ENCODE measurements at regions of chr1 and their contacts with region 1.

Region 1: GRCh38 chr1:57431400-57431799 is 7.5 kb upstream of the DAB1 start:
- DNase-seq: no peak
- H3K4me3 ChIP-seq: no peak overlapping the region
- H3K27ac ChIP-seq: no peak overlapping the region
- H3K4me1 ChIP-seq: no peaks in the 10 kb centered on the region
- H3K27me3 ChIP-seq: no peaks in the 10 kb centered on the region
- CTCF ChIP-seq: no peak

Region 2: GRCh38 chr1:57397791-57398469 is 33.5 kb before region 1 on chr1:
- CTCF ChIA-PET with region 1: no interaction called
- POLR2A ChIA-PET with region 1: interaction called, 18 read pairs
- intact Hi-C with region 1: no loop called
- DNase-seq: no peak
- H3K4me3 ChIP-seq: no peak overlapping the region
- H3K27ac ChIP-seq: no peak overlapping the region
- H3K4me1 ChIP-seq: peaks cover 22% of the 10 kb centered on the region
- H3K27me3 ChIP-seq: no peaks in the 10 kb centered on the region
- CTCF ChIP-seq: no peak

Measured in A673 (cell line).